Activated CD8-positive, alpha-beta memory T cell treated with anti-CD3 and anti-CD28 coated beads, Interleukin-2, amount 10 ng/mL, durations not matched to agents 7 days and 5 days (primary cell): ENCODE measurements at regions of chr19 and their contacts with region 1.

Region 1: DNA sequence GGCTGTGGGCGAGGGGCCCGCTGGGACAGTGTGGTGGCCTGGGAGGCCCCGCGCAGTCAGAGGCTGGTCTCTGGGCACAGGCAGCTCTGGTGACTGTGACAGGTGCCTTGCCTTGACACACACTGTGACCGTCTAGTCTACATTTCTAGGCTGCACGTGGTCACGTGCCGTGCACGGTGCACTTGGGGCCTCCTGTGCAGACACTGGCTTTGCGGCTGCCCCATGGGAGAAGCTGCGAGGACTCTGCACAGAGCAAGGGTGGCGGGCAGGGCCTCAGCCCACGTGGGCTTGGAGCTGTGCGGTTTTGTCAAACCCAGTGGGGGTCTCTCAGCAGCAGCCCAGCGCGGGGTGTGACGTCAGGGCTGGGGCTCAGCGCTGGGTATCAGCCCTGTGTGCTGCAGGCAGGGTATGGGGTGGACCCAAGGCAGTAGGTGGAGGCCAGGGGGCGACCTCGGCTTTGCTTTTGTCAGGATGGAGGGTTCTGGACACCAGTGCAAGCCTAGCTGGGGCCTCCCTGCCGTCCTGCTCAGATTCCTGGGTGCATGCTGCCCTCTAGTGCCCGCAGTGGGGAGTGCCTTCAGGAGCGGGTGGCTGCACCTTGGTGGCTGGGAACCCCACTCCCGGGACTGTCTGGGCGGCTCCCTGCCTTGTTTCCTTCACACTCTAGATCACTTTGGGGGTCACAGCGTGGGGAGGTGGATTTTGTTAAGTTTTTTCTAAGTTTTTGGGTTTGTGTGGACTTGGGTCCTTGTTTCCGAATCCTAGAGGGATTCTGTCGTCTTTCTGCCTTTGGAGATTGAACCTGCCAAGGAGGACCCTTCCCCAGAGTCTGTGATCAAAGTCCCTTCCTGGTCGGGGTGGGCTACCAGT is 62.6 kb downstream of the KDM4B start:
- DNase-seq: peak; percentile 87
- ATAC-seq: peak; percentile 89
- H3K4me3 Mint-ChIP-seq: no peak overlapping the region
- H3K27ac Mint-ChIP-seq: no peak overlapping the region
- H3K4me1 Mint-ChIP-seq: no peaks in the 10 kb centered on the region
- H3K27me3 Mint-ChIP-seq: no peaks in the 10 kb centered on the region

Region 2: DNA sequence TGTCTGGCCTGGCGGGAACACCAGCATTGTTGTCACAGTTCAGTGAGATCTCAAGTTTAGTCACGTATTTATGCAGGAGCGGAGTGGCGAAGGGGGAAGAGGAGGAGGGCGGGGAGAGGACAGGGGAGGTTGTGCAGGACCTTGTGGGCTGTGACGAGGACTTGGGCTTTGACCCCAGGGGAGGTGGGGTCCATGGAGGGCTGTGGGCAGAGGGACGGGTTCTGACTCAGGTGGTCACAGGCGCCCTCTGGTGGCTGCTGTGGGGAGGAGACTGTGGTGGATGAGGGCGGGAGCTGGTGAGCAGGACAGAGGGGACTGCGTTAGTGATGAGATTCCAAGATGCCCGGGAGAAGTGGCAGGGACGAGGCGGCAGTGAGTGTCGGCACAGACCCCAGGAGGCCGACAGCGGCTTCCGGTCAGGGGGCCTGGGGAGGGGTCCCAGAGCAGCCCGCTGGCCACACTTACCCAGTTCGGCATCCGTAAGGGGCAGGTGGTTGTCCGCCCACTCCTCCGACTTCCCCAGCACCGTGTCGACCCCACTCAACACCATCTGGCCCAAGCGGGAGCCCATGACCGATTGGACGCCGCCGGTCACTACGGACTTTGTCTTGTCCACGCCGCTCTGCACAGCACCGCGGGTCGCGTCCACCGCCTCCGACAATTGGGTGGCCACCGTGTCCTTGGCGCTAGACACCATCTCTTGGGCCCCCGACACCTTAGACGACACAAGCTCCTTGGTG is 179.7 kb before region 1 on chr19:
- CTCF ChIA-PET with region 1: interaction called, 13 read pairs
- DNase-seq: peak; percentile 82
- ATAC-seq: peak; percentile 87
- H3K4me3 Mint-ChIP-seq: no peak overlapping the region
- H3K27ac Mint-ChIP-seq: no peak overlapping the region
- H3K4me1 Mint-ChIP-seq: peaks cover 3% of the 10 kb centered on the region
- H3K27me3 Mint-ChIP-seq: no peaks in the 10 kb centered on the region

Region 3: DNA sequence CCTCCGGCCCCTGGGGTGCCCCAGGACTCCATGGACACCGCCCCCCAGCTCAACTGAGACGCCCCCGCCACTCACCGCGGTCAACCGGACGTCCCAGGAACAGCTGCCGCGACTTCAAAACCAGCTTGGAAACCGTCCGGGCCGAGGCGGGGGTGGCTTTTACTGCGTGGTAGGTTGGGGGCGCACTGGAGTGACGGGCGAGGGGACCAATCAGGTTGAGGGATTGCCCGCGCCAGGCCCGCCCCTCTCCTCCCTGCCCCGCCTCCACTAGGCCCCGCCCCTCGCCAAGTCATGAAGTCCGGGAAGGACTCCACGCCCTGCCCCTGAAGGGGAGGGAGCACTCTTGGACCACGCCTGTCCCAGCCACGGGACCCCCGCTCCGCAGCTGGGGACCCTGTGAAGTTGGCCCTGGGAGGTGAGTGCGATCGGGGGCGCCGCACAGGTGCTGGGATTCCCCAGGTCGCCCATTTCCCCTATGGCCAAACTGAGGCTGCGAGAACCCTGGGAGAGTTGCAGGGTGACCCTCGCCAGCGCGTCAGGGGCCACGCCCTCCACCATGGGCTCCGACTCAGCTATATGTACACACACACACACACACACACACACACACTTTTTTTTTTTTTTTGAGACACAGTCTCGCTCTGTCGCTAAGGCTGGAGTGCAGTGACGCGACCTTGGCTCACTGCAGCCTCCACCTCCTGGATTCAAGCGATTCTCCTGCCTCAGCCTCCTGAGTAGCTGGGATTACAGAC is 163.8 kb before region 1 on chr19 and contains the start of gene PLIN3:
- CTCF ChIA-PET with region 1: interaction called, 59 read pairs
- DNase-seq: peak; percentile 94
- ATAC-seq: peak; percentile 94
- H3K4me3 Mint-ChIP-seq: peak within 1 kb of the TSS; percentile 74
- H3K27ac Mint-ChIP-seq: peak within 1 kb of the TSS; percentile 65
- H3K4me1 Mint-ChIP-seq: peaks cover 19% of the 10 kb centered on the region
- H3K27me3 Mint-ChIP-seq: peaks cover 3% of the 10 kb centered on the region
- total RNA-seq, gene PLIN3: 29.0 to 32.4 TPM

Region 4: DNA sequence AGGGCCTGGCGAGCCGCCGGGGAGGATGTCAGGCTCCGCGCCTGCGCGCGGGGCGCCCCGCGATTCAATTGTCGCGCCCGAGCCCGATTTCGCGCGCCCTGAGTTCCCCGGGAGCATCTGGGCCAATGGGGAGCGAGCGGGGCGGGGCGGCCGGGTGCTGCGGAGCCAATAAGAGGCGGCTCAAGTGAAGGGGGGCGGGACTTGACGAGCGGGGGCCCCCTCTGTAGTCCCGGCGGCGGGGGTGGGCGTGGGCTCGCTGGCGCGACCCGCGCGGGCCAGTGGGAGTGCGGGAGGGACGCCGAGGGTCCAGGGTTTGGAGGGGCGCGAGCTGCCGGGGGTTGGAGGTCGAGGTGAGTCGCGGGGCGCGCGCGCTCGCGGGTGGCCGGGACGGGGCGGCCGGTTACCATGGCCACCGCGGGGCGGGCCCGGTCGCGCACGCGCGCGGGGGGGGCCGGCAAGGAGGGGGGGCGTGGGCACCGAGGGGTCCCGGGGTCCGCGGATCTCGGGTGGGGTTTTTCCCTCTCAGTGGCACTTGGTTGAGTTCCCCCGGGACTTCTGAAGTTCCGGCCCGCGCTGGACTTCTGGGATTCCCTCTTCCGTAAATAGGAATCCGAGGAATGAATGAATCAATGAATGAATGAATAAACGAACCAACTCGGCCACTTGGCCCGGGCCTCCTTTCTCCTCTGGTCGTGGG is 121.4 kb before region 1 on chr19:
- CTCF ChIA-PET with region 1: interaction called, 19 read pairs
- DNase-seq: peak; percentile 97
- ATAC-seq: peak; percentile 88
- H3K4me3 Mint-ChIP-seq: peak overlapping the region; percentile 79
- H3K27ac Mint-ChIP-seq: peak overlapping the region; percentile 82
- H3K4me1 Mint-ChIP-seq: peaks cover 45% of the 10 kb centered on the region
- H3K27me3 Mint-ChIP-seq: no peaks in the 10 kb centered on the region

Region 5: GRCh38 chr19:4916292-4917082 is 115.0 kb before region 1 on chr19:
- CTCF ChIA-PET with region 1: interaction called, 19 read pairs
- DNase-seq: peak; percentile 69
- ATAC-seq: peak; percentile 31
- H3K4me3 Mint-ChIP-seq: peak overlapping the region; percentile 81
- H3K27ac Mint-ChIP-seq: peak overlapping the region; percentile 91
- H3K4me1 Mint-ChIP-seq: peaks cover 61% of the 10 kb centered on the region
- H3K27me3 Mint-ChIP-seq: no peaks in the 10 kb centered on the region

Region 6: DNA sequence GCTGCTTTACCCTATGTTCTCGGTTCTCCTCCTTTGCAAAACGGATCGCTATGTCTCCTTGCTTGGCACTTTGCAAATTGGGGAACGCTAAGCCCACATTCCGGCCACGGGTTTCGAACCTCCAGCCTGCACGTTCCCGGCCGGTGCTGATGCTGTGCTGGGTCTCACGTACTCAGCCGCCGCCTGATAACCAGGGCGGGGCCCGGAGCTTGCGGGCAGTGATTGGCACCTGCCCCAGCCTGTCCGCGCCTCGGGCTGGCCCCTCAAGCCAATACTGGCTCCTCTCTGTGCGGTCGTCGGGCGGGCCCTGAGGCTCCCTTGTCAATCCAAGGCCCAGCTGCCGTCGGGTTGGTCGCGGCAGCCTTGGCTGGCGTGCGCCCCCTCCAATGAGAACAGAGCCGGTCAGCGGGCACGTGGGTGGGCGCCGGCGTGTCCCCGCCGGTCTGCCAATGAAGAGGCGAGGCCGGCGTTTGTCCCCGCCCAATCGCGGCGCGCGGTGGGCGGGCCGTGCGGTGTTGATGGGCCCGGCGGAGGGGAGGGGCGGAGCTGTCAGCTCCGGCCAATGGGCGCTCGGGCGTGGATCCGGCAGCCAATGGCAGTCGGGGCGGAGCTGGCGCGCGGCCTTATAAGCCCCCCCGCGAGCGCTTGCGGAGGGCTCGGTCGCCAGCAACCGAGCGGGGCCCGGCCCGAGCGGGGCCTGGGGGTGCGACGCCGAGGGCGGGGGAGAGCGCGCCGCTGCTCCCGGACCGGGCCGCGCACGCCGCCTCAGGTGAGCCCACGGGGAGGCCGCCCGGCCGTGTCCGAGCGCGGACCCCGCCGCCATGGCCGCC is 62.8 kb before region 1 on chr19 and contains the start of gene KDM4B:
- CTCF ChIA-PET with region 1: interaction called, 17 read pairs
- DNase-seq: peak; percentile 99
- ATAC-seq: peak; percentile 96
- H3K4me3 Mint-ChIP-seq: peak within 1 kb of the TSS; percentile 87
- H3K27ac Mint-ChIP-seq: peak within 1 kb of the TSS; percentile 93
- H3K4me1 Mint-ChIP-seq: peaks cover 38% of the 10 kb centered on the region
- H3K27me3 Mint-ChIP-seq: no peaks in the 10 kb centered on the region
- total RNA-seq, gene KDM4B: 31.2 to 42.3 TPM

Region 7: GRCh38 chr19:5001615-5002014 is 29.9 kb before region 1 on chr19:
- CTCF ChIA-PET with region 1: interaction called, 26 read pairs
- DNase-seq: peak; percentile 52
- ATAC-seq: peak; percentile 68
- H3K4me3 Mint-ChIP-seq: no peak overlapping the region
- H3K27ac Mint-ChIP-seq: no peak overlapping the region
- H3K4me1 Mint-ChIP-seq: peaks cover 6% of the 10 kb centered on the region
- H3K27me3 Mint-ChIP-seq: no peaks in the 10 kb centered on the region

Region 8: GRCh38 chr19:5093297-5093928 is 61.9 kb after region 1 on chr19:
- CTCF ChIA-PET with region 1: no interaction called
- DNase-seq: no peak
- ATAC-seq: no peak
- H3K4me3 Mint-ChIP-seq: no peak overlapping the region
- H3K27ac Mint-ChIP-seq: no peak overlapping the region
- H3K4me1 Mint-ChIP-seq: no peaks in the 10 kb centered on the region
- H3K27me3 Mint-ChIP-seq: no peaks in the 10 kb centered on the region